ENCODE measurements at regions of chr2 and their contacts with region 1.

Region 1: GRCh38 chr2:11688222-11689069 is 18.5 kb upstream of the NTSR2 start:
- DNase-seq: peak; percentile 48
- ATAC-seq: peak; percentile 91
- H3K4me3 ChIP-seq: peak overlapping the region in 1 of 3 experiments; percentile 13; a peak in 2 of 6 replicates
- H3K27ac ChIP-seq: no peak overlapping the region
- H3K4me1 ChIP-seq: peaks cover 20% of the 10 kb centered on the region
- H3K27me3 ChIP-seq: peaks cover 0 to 54% of the 10 kb centered on the region in 2 experiments; a peak in 4 of 5 replicates
- CTCF ChIP-seq: peak; percentile 93
- EP300 ChIP-seq: no peak
- POLR2A ChIP-seq: no peak
- RAD21 ChIP-seq: peak; percentile 75

Region 2: DNA sequence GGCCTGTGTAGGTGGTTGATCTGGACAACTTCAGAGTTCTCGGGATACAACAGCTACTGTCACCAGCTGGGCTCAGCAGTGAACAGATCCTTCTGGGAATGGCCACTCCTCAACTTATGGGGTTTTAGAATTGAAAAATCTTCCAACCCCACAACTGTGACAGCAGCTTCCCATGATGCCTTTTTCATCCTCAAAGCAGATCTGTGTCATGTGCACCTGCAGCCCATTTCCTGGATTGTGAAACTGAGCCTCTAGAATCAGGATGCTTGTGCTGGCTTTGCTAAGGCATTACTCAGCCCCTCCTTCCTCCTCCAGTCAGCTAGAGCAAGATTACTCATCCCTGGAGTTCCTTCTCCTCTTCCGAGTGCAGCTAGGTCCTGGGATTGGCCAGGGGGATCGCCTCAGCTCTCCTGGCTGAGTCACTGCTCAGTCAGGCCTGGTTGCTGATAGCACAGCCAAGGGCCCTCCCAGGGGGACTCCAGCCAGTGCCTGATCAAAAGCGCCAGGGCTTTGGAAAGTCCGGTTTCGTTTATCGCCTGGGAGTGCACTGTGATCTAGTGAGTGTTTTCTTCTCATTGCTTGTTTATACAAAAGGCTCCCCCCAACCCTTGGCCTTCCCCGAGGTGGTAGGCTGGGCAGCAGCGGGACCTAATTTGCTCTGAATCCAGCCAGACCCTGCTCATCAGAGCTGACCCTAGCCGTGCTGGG is 55.6 kb after region 1 on chr2:
- CTCF ChIA-PET with region 1: interaction called, 11 read pairs
- POLR2A ChIA-PET with region 1: interaction called, 4 read pairs
- in situ Hi-C with region 1: no loop called
- intact Hi-C with region 1: loop called (anchors 2 kb)
- DNase-seq: peak; percentile 90
- ATAC-seq: peak; percentile 79
- H3K4me3 ChIP-seq: peak overlapping the region; percentile 51 to 71 (median 59)
- H3K27ac ChIP-seq: peak overlapping the region; percentile 34
- H3K4me1 ChIP-seq: peaks cover 74% of the 10 kb centered on the region
- H3K27me3 ChIP-seq: peaks cover 0 to 5% of the 10 kb centered on the region in 2 experiments; a peak in 2 of 5 replicates
- CTCF ChIP-seq: peak; percentile 41; the same call in 1 of the 2 replicates
- EP300 ChIP-seq: peak; percentile 50 to 71; a peak in 2 of 4 replicates
- POLR2A ChIP-seq: peak in 1 of 2 experiments; percentile 51; a peak in 3 of 4 replicates
- RAD21 ChIP-seq: no peak

Region 3: GRCh38 chr2:11778923-11779757 is 90.7 kb after region 1 on chr2:
- CTCF ChIA-PET with region 1: interaction called, 30 read pairs
- POLR2A ChIA-PET with region 1: no interaction called
- in situ Hi-C with region 1: loop called (anchors 5 kb)
- intact Hi-C with region 1: loop called (anchors 1 kb)
- DNase-seq: peak; percentile 62
- ATAC-seq: peak; percentile 100
- H3K4me3 ChIP-seq: 0 out of 6 replicates have a peak overlapping the region, but pooled peaks of 1 of the 3 experiments have one; percentile 8
- H3K27ac ChIP-seq: no peak overlapping the region
- H3K4me1 ChIP-seq: peaks cover 9% of the 10 kb centered on the region; the same call in 1 of the 2 replicates
- H3K27me3 ChIP-seq: no peaks in the 10 kb centered on the region
- CTCF ChIP-seq: peak; percentile 96
- EP300 ChIP-seq: no peak
- POLR2A ChIP-seq: no peak
- RAD21 ChIP-seq: peak; percentile 95

Region 4: GRCh38 chr2:11784747-11785610 is 96.5 kb after region 1 on chr2:
- CTCF ChIA-PET with region 1: interaction called, 30 read pairs
- POLR2A ChIA-PET with region 1: no interaction called
- in situ Hi-C with region 1: loop called (anchors 5 kb)
- intact Hi-C with region 1: no loop called
- DNase-seq: no peak
- ATAC-seq: peak; percentile 94
- H3K4me3 ChIP-seq: no peak overlapping the region
- H3K27ac ChIP-seq: no peak overlapping the region
- H3K4me1 ChIP-seq: no peaks in the 10 kb centered on the region
- H3K27me3 ChIP-seq: no peaks in the 10 kb centered on the region
- CTCF ChIP-seq: peak; percentile 93
- EP300 ChIP-seq: no peak
- POLR2A ChIP-seq: no peak
- RAD21 ChIP-seq: peak; percentile 75